OCI-LY7 (cell line): ENCODE measurements at regions of chr7 and their contacts with region 1.

Region 1: DNA sequence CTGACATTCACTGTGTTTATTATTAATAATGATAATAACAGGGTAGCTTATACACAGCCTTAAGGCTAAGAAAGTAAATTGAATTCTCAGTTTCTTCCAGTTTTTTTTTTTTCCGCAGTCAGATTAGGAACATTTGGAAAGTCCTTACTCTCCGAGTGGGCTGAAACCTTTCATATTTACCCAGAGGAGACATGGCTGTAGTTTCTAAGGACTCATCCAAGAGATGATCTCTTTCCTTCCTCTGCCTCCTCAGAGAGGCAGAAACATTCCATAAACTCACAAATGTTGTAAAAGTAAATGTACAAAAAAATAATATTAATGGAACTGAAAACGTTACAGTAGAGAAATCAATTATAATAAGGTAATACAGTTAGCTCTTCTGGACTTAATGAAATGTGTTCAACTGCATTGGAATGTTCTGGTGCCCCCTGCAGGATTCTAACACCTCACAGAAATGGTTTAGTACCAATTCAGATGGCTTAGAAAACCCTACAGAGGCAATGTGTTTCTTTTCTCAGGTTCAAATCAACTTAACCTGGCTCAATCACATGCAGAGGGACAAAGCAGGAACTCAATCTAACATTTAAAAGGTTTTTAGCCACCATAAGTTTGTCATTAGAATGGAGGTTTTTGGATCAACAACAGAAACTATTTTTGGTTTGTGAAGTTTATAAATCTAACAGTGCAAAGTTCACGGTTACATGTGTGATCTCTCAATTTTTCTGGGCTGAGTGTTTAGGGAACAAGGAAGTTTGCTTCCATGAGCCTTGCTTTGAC is 71.7 kb downstream of the ICA1 start:
- DNase-seq: peak; percentile 74
- H3K4me3 ChIP-seq: no peak overlapping the region
- H3K27ac ChIP-seq: no peak overlapping the region
- H3K4me1 ChIP-seq: no peaks in the 10 kb centered on the region
- CTCF ChIP-seq: peak; percentile 94

Region 2: DNA sequence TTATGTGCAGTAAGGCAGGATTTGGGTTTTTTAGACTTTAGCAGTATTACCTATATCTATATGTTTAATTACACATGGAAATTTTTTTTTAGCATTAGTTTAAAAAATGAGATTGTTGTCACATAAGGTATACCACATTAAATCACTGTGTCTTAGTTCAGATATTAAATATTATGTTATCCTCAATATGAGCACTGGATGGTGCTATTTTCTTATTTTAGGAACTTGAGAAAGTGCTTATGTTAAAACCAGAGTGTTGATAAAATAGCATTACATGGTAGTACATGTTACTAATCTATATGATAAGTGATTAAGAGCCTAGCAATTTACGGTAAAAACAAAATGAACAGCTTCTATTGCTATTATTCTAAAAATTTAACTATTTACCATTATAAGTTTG is 594.9 kb before region 1 on chr7:
- CTCF ChIA-PET with region 1: no interaction called
- POLR2A ChIA-PET with region 1: no interaction called
- intact Hi-C with region 1: loop called (anchors 5 kb)
- DNase-seq: peak; percentile 55
- H3K4me3 ChIP-seq: no peak overlapping the region
- H3K27ac ChIP-seq: no peak overlapping the region
- H3K4me1 ChIP-seq: no peaks in the 10 kb centered on the region
- CTCF ChIP-seq: peak; percentile 80

Region 3: GRCh38 chr7:7681179-7681935 is 508.9 kb before region 1 on chr7:
- CTCF ChIA-PET with region 1: interaction called, 7 read pairs
- POLR2A ChIA-PET with region 1: interaction called, 5 read pairs
- intact Hi-C with region 1: loop called (anchors 1 kb)
- DNase-seq: peak; percentile 75
- H3K4me3 ChIP-seq: no peak overlapping the region
- H3K27ac ChIP-seq: peak overlapping the region; percentile 12
- H3K4me1 ChIP-seq: peaks cover 6% of the 10 kb centered on the region
- CTCF ChIP-seq: peak; percentile 91

Region 4: DNA sequence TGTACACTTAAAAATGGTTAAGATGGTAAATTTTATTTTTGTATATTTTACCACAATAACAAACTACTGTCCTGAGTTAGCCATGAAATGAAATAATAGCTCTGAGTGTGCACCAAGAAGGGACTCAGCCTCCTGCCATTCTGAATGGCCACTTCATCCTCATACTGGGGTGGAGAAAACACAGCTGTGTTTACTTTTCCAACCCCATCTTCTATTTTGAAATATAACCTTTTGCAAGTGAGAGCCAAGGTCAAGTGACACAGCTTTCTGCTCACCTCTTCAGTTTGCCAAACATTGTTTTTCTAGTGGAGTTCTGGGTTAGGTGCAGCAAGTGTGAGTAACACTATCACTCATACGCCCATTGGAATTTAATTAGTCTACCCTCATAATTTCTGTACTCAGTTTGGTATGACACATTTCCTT is 329.1 kb before region 1 on chr7:
- CTCF ChIA-PET with region 1: no interaction called
- POLR2A ChIA-PET with region 1: no interaction called
- intact Hi-C with region 1: no loop called
- DNase-seq: no peak
- H3K4me3 ChIP-seq: no peak overlapping the region
- H3K27ac ChIP-seq: no peak overlapping the region
- H3K4me1 ChIP-seq: peaks cover 29% of the 10 kb centered on the region
- CTCF ChIP-seq: no peak

Region 5: DNA sequence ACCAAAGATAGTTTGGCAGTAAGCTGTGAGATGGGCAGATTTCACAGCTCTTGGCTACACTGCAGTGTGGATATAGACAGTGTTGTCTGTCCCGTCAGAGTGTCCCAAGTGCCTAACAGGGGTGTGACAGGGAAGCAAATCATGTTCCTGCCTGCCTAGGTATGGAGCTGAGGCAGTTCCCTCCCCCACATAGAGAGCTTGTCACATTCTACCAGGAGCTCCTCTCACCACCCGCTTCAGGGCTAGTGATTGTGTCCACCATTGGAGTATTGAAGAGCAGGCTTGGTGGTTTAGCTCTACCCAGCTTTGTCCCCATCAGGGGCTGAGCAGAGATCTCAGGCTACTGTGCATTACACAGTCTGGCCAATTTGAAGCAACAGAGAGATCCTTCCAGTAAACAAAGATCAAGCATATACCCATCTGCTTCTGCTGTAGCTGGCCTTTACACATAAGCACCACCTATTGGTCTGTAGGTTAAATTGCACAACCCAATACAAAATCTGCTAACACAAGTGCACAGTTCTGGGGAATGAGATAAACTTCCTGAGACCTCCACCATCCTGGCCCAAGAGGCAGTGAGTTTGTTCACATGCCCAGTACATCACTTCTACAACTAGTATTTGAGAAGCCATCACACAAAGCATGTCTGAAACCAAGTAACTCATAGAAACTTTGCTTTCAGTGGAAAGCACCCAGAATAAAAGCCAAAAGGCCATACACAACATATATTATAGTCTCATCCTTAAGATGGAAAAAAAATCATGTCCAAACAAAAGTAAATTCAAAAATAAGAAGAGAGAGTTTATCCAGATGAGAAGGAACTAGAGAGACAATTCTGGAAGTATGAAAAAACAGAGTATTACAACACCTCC is 154.4 kb before region 1 on chr7:
- CTCF ChIA-PET with region 1: no interaction called
- POLR2A ChIA-PET with region 1: no interaction called
- intact Hi-C with region 1: loop called (anchors 5 kb)
- DNase-seq: peak; percentile 62
- H3K4me3 ChIP-seq: no peak overlapping the region
- H3K27ac ChIP-seq: no peak overlapping the region
- H3K4me1 ChIP-seq: peaks cover 10% of the 10 kb centered on the region
- CTCF ChIP-seq: peak; percentile 83

Region 6: DNA sequence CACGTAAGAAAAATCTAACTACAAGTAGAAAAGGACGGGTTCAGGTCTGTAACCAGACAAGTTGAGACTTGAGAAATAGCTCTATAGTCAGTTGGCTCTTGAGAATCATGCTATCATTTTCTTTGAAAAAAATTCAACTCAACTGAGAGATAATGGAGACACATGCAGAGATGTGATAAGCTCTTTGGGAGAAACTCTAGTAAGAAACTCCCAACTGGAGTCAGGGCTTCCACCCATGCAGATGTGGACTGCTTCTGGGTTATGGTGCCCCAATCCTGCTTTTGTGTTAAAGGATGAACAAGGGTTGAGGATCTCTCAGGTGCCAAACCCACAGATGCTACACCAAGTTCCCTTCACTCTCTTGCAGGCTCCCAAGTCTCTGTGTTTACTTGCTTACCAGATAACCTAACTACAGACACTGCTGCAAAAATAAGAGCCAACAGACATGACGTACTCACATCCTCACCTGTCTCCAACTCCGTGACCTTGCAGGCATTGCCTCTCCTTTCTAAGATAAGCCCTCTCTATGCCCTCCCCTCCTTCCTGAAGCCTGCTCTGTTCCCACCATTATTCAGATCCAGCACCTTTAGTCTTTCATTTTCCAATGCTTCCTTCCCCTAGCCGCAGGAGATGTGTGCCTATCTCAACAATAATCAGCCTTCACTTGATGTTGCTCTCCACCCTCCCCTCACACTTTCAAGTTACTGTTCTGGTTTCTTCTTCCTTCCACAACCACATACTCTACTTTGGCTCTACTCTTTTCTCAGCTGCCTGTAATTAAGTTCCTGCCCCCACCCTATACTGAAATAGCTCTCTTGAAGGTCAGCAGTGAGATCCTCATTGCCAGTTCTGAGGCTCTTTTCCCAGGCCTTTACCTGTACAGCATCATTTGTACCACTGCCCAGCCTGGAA is 58.4 kb before region 1 on chr7:
- CTCF ChIA-PET with region 1: no interaction called
- POLR2A ChIA-PET with region 1: no interaction called
- intact Hi-C with region 1: loop called (anchors 2 kb)
- DNase-seq: no peak
- H3K4me3 ChIP-seq: no peak overlapping the region
- H3K27ac ChIP-seq: no peak overlapping the region
- H3K4me1 ChIP-seq: no peaks in the 10 kb centered on the region
- CTCF ChIP-seq: no peak

Region 7: GRCh38 chr7:8710124-8710523 is 519.8 kb after region 1 on chr7:
- CTCF ChIA-PET with region 1: no interaction called
- POLR2A ChIA-PET with region 1: no interaction called
- intact Hi-C with region 1: no loop called
- DNase-seq: no peak
- H3K4me3 ChIP-seq: no peak overlapping the region
- H3K27ac ChIP-seq: no peak overlapping the region
- H3K4me1 ChIP-seq: no peaks in the 10 kb centered on the region
- CTCF ChIP-seq: no peak